SK-N-SH (cell line): ENCODE measurements at regions of chr20 and their contacts with region 1.

Region 1: GRCh38 chr20:41034239-41034638 is 5.6 kb downstream of the TOP1 start:
- DNase-seq: no peak
- H3K4me3 ChIP-seq: no peak overlapping the region
- H3K27ac ChIP-seq: no peak overlapping the region
- H3K4me1 ChIP-seq: peaks cover 27 to 33% of the 10 kb centered on the region in 2 experiments; a peak in 3 of 4 replicates
- H3K27me3 ChIP-seq: no peaks in the 10 kb centered on the region
- CTCF ChIP-seq: no peak
- EP300 ChIP-seq: no peak
- RAD21 ChIP-seq: no peak

Region 2: GRCh38 chr20:41044409-41045062 is 10.3 kb after region 1 on chr20:
- CTCF ChIA-PET with region 1: interaction called, 11 read pairs
- POLR2A ChIA-PET with region 1: interaction called, 4 read pairs
- DNase-seq: no peak
- H3K4me3 ChIP-seq: no peak overlapping the region
- H3K27ac ChIP-seq: no peak overlapping the region
- H3K4me1 ChIP-seq: peaks cover 14 to 33% of the 10 kb centered on the region in 2 experiments; a peak in 3 of 4 replicates
- H3K27me3 ChIP-seq: no peaks in the 10 kb centered on the region
- CTCF ChIP-seq: no peak
- EP300 ChIP-seq: no peak
- RAD21 ChIP-seq: no peak

Region 3: GRCh38 chr20:41664350-41664983 is 630.2 kb after region 1 on chr20:
- CTCF ChIA-PET with region 1: no interaction called
- POLR2A ChIA-PET with region 1: no interaction called
- DNase-seq: peak; percentile 10
- H3K4me3 ChIP-seq: no peak overlapping the region
- H3K27ac ChIP-seq: no peak overlapping the region
- H3K4me1 ChIP-seq: no peaks in the 10 kb centered on the region
- H3K27me3 ChIP-seq: no peaks in the 10 kb centered on the region
- CTCF ChIP-seq: no peak
- EP300 ChIP-seq: no peak
- RAD21 ChIP-seq: no peak